ENCODE measurements at regions of chr20 and their contacts with region 1.

Region 1: GRCh38 chr20:53907968-53908751 is 162.2 kb downstream of the BCAS1 start:
- DNase-seq: no peak
- ATAC-seq: no peak
- H3K4me3 ChIP-seq: no peak overlapping the region
- H3K27ac ChIP-seq: peak overlapping the region; percentile 100
- H3K4me1 ChIP-seq: peaks cover 42% of the 10 kb centered on the region
- H3K27me3 ChIP-seq: no peaks in the 10 kb centered on the region
- CTCF ChIP-seq: no peak

Region 2: GRCh38 chr20:53897884-53898555 is 10.1 kb before region 1 on chr20:
- CTCF ChIA-PET with region 1: no interaction called
- POLR2A ChIA-PET with region 1: interaction called, 10 read pairs
- in situ Hi-C with region 1: no loop called
- intact Hi-C with region 1: no loop called
- DNase-seq: no peak
- ATAC-seq: peak; percentile 52
- H3K4me3 ChIP-seq: peak overlapping the region; percentile 38
- H3K27ac ChIP-seq: peak overlapping the region; percentile 100
- H3K4me1 ChIP-seq: peaks cover 65% of the 10 kb centered on the region
- H3K27me3 ChIP-seq: no peaks in the 10 kb centered on the region
- CTCF ChIP-seq: no peak

Region 3: DNA sequence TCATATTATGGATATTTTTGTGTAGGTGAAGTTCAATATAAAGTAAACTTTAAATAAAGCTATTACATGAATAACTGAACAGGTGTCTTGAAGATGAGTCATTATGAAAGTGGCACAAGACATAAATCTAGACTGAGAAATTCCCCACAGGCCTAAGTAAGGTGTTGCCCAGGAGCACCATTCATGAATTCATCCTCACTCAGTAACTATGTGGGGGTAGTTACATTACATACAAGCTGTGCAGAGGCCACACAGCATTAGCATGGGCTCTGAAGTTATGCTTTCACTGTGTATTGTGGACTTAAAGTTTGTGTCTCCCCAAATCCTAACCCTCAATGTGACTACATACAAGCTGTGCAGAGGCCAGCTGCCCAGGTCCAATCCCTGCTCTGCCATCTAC is 96.3 kb after region 1 on chr20:
- CTCF ChIA-PET with region 1: no interaction called
- POLR2A ChIA-PET with region 1: no interaction called
- in situ Hi-C with region 1: no loop called
- intact Hi-C with region 1: no loop called
- DNase-seq: no peak
- ATAC-seq: no peak
- H3K4me3 ChIP-seq: no peak overlapping the region
- H3K27ac ChIP-seq: no peak overlapping the region
- H3K4me1 ChIP-seq: no peaks in the 10 kb centered on the region
- H3K27me3 ChIP-seq: no peaks in the 10 kb centered on the region
- CTCF ChIP-seq: no peak

Measured in Panc1 (cell line).